Right cardiac atrium (tissue), 5 donors: ENCODE measurements at regions of chr20 and their contacts with region 1.

Region 1: DNA sequence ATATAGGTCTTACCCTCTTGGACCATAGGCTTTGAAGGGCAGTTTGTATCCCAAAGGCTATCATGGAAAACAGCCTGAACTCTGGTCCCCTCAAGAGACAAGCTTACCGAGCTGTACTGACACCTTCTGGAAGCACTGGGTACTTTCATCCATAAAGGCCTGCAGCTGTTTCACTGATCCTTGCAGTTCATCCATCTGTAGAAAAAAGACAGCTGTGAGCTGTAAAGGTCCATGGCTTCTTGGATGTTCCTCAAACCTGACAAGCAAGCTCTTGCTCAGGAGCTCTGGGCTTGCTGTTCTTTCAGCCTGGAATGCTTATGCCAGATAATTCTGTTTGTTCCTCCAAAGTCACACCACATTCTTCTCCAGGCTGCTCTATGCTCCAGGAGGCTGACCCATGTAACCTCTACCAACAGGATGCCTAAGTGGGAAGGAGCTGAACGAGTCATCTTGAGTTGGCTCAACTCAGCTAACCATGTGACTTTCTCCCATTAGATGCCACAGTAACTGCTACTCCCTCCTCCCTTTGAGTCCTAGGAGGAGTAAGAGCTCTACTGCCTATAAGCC is 8.8 kb upstream of the NDRG3 start:
- DNase-seq: no peak
- ATAC-seq: peak; percentile 87 to 90
- H3K4me3 ChIP-seq: no peak overlapping the region
- H3K27ac ChIP-seq: no peak overlapping the region
- H3K4me1 ChIP-seq: no peaks in the 10 kb centered on the region
- H3K27me3 ChIP-seq: no peaks in the 10 kb centered on the region

Region 2: GRCh38 chr20:36717657-36718056 is 37.1 kb before region 1 on chr20:
- intact Hi-C with region 1: loop called in 1 of 4 experiments (anchors 5 kb)
- DNase-seq: no peak
- ATAC-seq: peak; percentile 52 to 59
- H3K4me3 ChIP-seq: no peak overlapping the region
- H3K27ac ChIP-seq: no peak overlapping the region
- H3K4me1 ChIP-seq: no peaks in the 10 kb centered on the region
- H3K27me3 ChIP-seq: no peaks in the 10 kb centered on the region